Activated B cell treated with CpG ODN at 0.5 μM for 24 hours (primary cell): ENCODE measurements at regions of chrX and their contacts with region 1.

Region 1: DNA sequence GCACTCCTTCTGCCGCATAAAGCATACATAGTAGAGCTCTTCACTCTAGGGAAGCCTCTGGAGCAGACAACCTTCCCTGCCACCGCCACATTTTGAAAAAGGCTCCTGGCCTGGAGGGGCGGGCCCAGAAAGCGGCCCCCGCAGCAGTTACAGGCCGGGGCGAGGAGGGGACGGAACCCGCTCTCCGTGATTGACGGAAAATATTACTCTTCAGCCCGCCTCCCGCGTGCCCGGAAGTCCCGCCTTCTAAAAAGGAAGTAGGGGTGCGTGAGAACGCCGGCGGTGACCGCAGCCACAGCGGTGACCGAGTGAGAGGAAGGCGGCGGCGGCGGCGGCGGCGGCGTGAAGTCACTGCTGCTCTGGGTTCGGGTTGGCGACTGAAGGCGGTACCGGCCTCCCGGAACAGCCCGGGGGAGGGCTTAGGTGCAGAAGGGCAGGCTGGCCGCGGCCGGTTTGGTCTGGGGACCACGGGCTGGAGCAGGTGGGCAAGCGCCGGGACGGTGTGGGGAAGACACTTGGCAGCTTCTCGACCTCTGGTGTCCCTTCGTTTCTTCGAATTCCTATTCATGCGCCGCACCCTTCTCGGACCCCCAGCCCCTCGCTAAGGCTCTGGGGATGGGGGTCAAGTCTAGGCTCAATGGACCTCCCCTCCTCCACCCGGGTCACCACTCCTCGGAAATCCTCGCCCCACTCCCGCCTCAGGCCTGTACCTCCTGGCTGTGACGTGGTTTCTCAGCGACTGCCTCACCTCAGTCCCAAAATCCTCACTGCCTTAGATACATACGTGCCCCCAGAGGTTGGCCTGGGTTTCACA is at the start of gene HCCS:
- DNase-seq: peak; percentile 70
- ATAC-seq: peak; percentile 87
- H3K4me3 Mint-ChIP-seq: peak within 1 kb of the TSS; percentile 92
- H3K27ac Mint-ChIP-seq: peak within 1 kb of the TSS; percentile 94
- H3K4me1 Mint-ChIP-seq: peaks cover 38% of the 10 kb centered on the region
- H3K27me3 Mint-ChIP-seq: no peaks in the 10 kb centered on the region
- CTCF ChIP-seq: no peak
- total RNA-seq, gene HCCS: 22.6 and 26.6 TPM in 2 replicates

Region 2: DNA sequence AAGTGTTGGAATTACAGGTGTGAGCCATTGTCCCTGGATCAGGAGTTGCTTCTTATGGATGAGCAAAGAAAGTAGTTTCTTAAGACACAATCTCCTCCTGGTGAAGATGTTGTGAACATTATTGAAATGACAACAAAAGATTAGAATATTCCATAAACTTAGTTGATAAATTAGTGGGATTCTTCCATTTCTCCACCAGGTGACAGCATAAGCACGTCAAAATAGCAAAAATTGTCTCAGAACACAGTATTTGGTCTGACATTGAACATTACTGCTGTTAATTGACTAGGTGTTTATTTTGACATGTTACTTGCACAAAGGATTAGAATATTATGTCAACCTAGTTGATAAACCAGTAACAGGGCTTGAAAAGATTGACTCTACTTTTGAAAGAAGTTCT is 1122.5 kb before region 1 on chrX:
- CTCF ChIA-PET with region 1: no interaction called
- POLR2A ChIA-PET with region 1: no interaction called
- intact Hi-C with region 1: loop called (anchors 10 kb)
- DNase-seq: no peak
- ATAC-seq: no peak
- H3K4me3 Mint-ChIP-seq: no peak overlapping the region
- H3K27ac Mint-ChIP-seq: no peak overlapping the region
- H3K4me1 Mint-ChIP-seq: peaks cover 17% of the 10 kb centered on the region
- H3K27me3 Mint-ChIP-seq: no peaks in the 10 kb centered on the region
- CTCF ChIP-seq: no peak

Region 3: GRCh38 chrX:10156199-10157031 is 954.8 kb before region 1 on chrX and contains the start of gene CLCN4:
- CTCF ChIA-PET with region 1: no interaction called
- POLR2A ChIA-PET with region 1: no interaction called
- intact Hi-C with region 1: loop called (anchors 5 kb)
- DNase-seq: peak; percentile 26
- ATAC-seq: peak; percentile 65
- H3K4me3 Mint-ChIP-seq: peak within 1 kb of the TSS; percentile 83
- H3K27ac Mint-ChIP-seq: peak within 1 kb of the TSS; percentile 90
- H3K4me1 Mint-ChIP-seq: peaks cover 34% of the 10 kb centered on the region
- H3K27me3 Mint-ChIP-seq: no peaks in the 10 kb centered on the region
- CTCF ChIP-seq: no peak
- total RNA-seq, gene CLCN4: 3.4 and 4.7 TPM in 2 replicates

Region 4: GRCh38 chrX:11137543-11138139 is 26.4 kb after region 1 on chrX:
- CTCF ChIA-PET with region 1: no interaction called
- POLR2A ChIA-PET with region 1: no interaction called
- intact Hi-C with region 1: loop called (anchors 2 kb)
- DNase-seq: no peak
- ATAC-seq: no peak
- H3K4me3 Mint-ChIP-seq: no peak overlapping the region
- H3K27ac Mint-ChIP-seq: no peak overlapping the region
- H3K4me1 Mint-ChIP-seq: no peaks in the 10 kb centered on the region
- H3K27me3 Mint-ChIP-seq: no peaks in the 10 kb centered on the region
- CTCF ChIP-seq: no peak

Region 5: GRCh38 chrX:11758400-11759171 is 647.3 kb after region 1 on chrX:
- CTCF ChIA-PET with region 1: no interaction called
- POLR2A ChIA-PET with region 1: interaction called, 5 read pairs
- intact Hi-C with region 1: loop called (anchors 1 kb)
- DNase-seq: peak; percentile 81
- ATAC-seq: peak; percentile 65
- H3K4me3 Mint-ChIP-seq: peak overlapping the region; percentile 94
- H3K27ac Mint-ChIP-seq: peak overlapping the region; percentile 95
- H3K4me1 Mint-ChIP-seq: peaks cover 35% of the 10 kb centered on the region
- H3K27me3 Mint-ChIP-seq: no peaks in the 10 kb centered on the region
- CTCF ChIP-seq: no peak